Activated naive CD4-positive, alpha-beta T cell treated with anti-CD3 and anti-CD28 coated beads for 36 hours (primary cell): ENCODE measurements at regions of chr9 and their contacts with region 1.

Region 1: GRCh38 chr9:80976403-80976802 is 712.9 kb downstream of the TLE1 start:
- DNase-seq: no peak
- H3K4me3 Mint-ChIP-seq: no peak overlapping the region
- H3K27ac Mint-ChIP-seq: no peak overlapping the region
- H3K4me1 Mint-ChIP-seq: no peaks in the 10 kb centered on the region
- H3K27me3 Mint-ChIP-seq: no peaks in the 10 kb centered on the region

Region 2: DNA sequence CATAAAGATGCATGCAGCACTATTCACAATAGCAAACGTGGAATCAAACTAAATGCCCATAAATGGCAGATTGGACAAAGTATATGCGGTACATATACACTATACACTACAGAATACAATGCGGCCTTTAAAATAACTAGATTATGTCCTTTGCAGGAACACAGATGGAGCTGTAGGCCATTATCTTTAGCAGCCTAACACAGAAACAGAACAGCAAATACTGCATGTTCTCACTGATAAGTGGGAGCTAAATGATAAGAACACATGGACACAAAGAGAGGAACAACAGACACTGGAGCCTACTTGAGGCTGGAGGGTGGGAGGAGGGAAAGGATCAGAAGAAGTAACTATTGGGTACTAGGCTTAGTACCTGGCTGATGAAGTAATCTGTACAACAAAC is 45.2 kb before region 1 on chr9:
- CTCF ChIA-PET with region 1: no interaction called
- intact Hi-C with region 1: loop called (anchors 1 kb)
- DNase-seq: no peak
- H3K4me3 Mint-ChIP-seq: no peak overlapping the region
- H3K27ac Mint-ChIP-seq: no peak overlapping the region
- H3K4me1 Mint-ChIP-seq: no peaks in the 10 kb centered on the region
- H3K27me3 Mint-ChIP-seq: no peaks in the 10 kb centered on the region

Region 3: DNA sequence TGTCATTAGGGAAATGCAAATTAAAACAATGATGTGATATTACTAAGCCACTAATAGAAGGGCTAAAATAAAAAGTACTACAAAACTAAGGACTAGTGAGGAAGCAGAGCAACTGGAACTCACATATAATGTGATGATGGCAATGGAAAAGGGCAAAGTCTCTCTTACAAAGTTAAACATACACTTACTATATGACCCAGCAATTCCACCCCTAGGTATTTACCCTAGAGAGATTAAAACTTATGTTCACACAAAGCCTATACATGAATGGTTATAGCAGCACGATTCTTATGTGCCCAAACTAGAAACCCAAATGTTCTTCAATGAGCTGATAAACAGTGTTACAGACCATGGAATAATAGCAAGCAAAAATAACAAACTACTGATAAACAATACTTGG is 69.3 kb after region 1 on chr9:
- CTCF ChIA-PET with region 1: no interaction called
- intact Hi-C with region 1: loop called (anchors 10 kb)
- DNase-seq: no peak
- H3K4me3 Mint-ChIP-seq: no peak overlapping the region
- H3K27ac Mint-ChIP-seq: no peak overlapping the region
- H3K4me1 Mint-ChIP-seq: no peaks in the 10 kb centered on the region
- H3K27me3 Mint-ChIP-seq: no peaks in the 10 kb centered on the region

Region 4: DNA sequence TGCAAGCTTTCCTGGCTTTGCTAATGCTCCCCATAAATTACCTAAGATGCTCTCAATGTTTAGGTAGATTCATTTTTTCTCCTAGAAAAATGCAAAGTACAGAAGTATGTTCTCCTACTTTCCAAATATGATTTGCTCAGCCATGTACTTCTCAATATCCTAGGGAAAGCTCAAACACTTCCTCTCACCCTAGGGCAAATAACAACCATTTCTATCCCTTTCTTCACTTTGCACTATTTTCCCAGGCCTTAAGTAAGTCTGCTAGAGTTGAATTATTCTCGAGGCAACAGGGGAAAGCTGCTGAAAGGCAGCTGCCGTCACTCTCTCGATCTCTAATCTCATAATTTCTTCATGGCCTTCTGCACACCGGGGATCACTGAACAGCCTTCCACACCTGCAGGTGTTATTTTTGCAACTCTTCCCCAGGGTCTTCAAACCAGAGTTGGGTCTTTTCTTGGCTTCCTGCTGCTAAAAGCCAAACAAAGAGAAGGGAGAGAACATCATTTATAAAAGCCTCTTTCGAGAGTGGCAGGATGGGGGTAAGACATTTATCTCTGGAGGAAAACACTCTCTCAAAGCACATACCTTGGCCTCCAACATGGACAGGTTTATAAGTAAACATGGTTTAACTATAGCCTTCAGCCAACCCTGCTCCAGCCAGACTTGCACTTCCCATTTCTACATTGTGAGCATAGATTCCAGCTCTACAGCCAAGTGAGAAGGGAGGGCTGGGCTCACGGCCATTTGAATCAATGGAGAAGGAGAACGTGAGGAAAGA is 247.8 kb after region 1 on chr9:
- CTCF ChIA-PET with region 1: no interaction called
- intact Hi-C with region 1: no loop called
- DNase-seq: no peak
- H3K4me3 Mint-ChIP-seq: no peak overlapping the region
- H3K27ac Mint-ChIP-seq: no peak overlapping the region
- H3K4me1 Mint-ChIP-seq: no peaks in the 10 kb centered on the region
- H3K27me3 Mint-ChIP-seq: no peaks in the 10 kb centered on the region